Activated B cell treated with CpG ODN at 0.5 μM for 24 hours (primary cell): ENCODE measurements at regions of chr19 and their contacts with region 1.

Region 1: DNA sequence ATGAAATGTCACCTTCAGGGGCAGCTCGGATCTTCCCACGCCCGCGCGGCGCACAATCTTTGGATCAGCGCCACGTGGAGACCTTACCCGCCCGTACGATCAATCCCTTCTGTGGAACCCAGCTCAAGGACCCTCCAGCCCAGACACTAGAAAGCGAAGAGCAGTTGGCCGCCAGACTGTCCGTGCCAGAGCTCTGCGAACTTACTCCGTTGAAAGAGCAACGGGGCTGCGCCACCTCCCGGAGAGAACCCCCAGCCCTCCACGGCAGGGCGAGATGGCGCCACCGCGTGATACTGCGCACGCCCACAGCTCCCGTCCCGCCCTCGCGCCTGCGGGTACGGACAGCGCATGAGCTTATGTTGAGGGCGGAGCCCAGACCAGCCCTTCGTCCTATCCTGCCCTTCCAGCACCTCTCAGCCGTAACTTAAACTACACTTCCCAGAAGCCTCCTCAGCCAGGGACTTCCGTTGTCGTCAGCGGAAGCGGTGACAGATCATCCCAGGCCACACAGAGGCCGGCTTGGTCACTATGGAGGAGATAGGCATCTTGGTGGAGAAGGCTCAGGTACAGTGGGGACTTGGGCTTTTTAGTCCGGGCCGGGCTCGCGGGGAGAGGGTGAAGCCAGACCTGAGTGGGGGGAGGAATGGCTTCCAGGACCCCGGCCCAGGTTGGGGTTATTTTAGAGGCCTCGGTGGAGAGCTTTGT is at the start of gene PSMC4:
- DNase-seq: peak; percentile 98
- ATAC-seq: peak; percentile 96
- H3K4me3 Mint-ChIP-seq: peak within 1 kb of the TSS; percentile 98
- H3K27ac Mint-ChIP-seq: peak within 1 kb of the TSS; percentile 98
- H3K4me1 Mint-ChIP-seq: peaks cover 39% of the 10 kb centered on the region
- H3K27me3 Mint-ChIP-seq: no peaks in the 10 kb centered on the region
- CTCF ChIP-seq: peak; percentile 21
- total RNA-seq, gene PSMC4: 109 and 115 TPM in 2 replicates

Region 2: GRCh38 chr19:39833464-39834286 is 137.2 kb before region 1 on chr19 and contains the start of gene DYRK1B:
- CTCF ChIA-PET with region 1: interaction called, 12 read pairs
- POLR2A ChIA-PET with region 1: interaction called, 12 read pairs
- intact Hi-C with region 1: loop called (anchors 1 kb)
- DNase-seq: peak; percentile 90
- ATAC-seq: peak; percentile 86
- H3K4me3 Mint-ChIP-seq: peak within 1 kb of the TSS; percentile 82
- H3K27ac Mint-ChIP-seq: peak within 1 kb of the TSS; percentile 87
- H3K4me1 Mint-ChIP-seq: peaks cover 33% of the 10 kb centered on the region
- H3K27me3 Mint-ChIP-seq: no peaks in the 10 kb centered on the region
- CTCF ChIP-seq: no peak
- total RNA-seq, gene DYRK1B: 16.9 and 17.2 TPM in 2 replicates

Region 3: DNA sequence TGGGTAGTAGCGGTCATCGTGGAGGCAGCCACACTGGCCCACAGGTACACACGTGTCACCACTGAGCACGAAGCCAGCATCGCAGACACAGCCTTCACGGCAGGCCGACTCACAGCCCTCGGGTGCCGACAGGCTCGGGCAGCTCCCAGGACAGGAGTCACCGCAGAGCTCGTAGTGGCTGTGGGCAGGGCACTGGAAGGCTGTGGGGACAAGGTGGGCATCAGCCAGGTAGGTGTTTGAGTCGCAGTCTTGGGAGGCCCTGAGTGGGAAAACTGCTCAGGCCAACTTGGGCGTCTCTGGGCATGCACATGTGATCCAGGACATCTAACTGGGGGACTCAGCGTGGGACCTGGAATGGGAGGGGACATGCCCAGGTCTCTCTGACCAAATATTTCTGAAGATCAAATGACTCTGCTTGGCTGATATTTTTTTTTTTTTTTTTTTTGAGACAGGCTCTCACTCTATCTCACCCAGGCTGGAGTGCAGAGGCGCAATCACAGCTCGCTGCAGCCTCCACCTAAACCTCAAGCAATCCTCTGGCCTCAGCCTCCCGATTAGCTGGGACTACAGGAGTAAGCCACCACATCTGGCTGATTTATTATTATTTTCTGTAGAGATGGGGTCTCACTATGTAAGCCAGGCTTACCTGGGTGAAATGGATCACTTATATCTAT is 80.8 kb before region 1 on chr19:
- CTCF ChIA-PET with region 1: interaction called, 6 read pairs
- POLR2A ChIA-PET with region 1: interaction called, 4 read pairs
- intact Hi-C with region 1: loop called (anchors 5 kb)
- DNase-seq: no peak
- ATAC-seq: no peak
- H3K4me3 Mint-ChIP-seq: no peak overlapping the region
- H3K27ac Mint-ChIP-seq: no peak overlapping the region
- H3K4me1 Mint-ChIP-seq: no peaks in the 10 kb centered on the region
- H3K27me3 Mint-ChIP-seq: no peaks in the 10 kb centered on the region
- CTCF ChIP-seq: no peak

Region 4: GRCh38 chr19:39941615-39942365 is 29.0 kb before region 1 on chr19:
- CTCF ChIA-PET with region 1: interaction called, 58 read pairs
- POLR2A ChIA-PET with region 1: interaction called, 90 read pairs
- intact Hi-C with region 1: loop called (anchors 1 kb)
- DNase-seq: peak; percentile 29
- ATAC-seq: peak; percentile 82
- H3K4me3 Mint-ChIP-seq: peak overlapping the region; percentile 77
- H3K27ac Mint-ChIP-seq: peak overlapping the region; percentile 88
- H3K4me1 Mint-ChIP-seq: peaks cover 77% of the 10 kb centered on the region
- H3K27me3 Mint-ChIP-seq: no peaks in the 10 kb centered on the region
- CTCF ChIP-seq: no peak

Region 5: DNA sequence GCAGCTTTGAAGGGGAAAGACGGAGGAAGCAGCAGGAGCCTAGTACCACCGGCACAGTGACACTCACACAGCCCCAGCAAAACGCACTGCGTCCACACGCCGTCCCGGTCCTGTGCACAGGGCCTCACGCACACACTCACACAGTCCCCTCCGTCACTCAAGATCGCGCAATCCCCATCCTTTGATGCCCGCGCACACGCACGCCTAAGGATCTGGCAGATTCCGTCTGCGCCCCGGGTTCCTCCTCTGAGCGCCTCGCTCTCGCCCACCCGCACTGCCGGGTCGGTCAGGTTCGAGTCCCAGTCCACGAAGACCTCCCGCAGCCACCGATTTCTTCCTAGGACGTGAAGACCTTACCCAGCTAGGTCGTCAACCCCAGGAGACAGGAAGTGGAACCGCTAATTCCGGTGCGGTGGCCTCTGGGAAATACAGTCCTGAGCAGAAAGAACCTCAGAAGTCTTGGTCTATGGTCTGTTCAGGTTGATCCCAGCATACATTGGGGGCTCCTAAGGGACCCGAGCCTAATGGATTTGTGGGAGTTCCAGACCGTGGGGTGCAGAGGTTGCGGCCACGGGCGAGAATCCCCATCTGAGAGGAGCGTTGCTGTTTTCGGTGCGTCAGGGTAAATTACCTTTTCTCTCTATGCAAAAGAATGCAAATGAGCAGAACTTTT is 85.1 kb after region 1 on chr19 and contains the start of gene ZNF780B:
- CTCF ChIA-PET with region 1: interaction called, 8 read pairs
- POLR2A ChIA-PET with region 1: interaction called, 9 read pairs
- intact Hi-C with region 1: loop called (anchors 1 kb)
- DNase-seq: peak; percentile 67
- ATAC-seq: peak; percentile 90
- H3K4me3 Mint-ChIP-seq: peak within 1 kb of the TSS; percentile 100
- H3K27ac Mint-ChIP-seq: peak within 1 kb of the TSS; percentile 98
- H3K4me1 Mint-ChIP-seq: peaks cover 48% of the 10 kb centered on the region
- H3K27me3 Mint-ChIP-seq: peaks cover 6% of the 10 kb centered on the region
- CTCF ChIP-seq: no peak
- total RNA-seq, gene ZNF780B: 36.4 and 51.1 TPM in 2 replicates